Astrocyte of the spinal cord (primary cell): ENCODE measurements at regions of chr6 and their contacts with region 1.

Region 1: GRCh38 chr6:30541515-30542403 is 14.5 kb downstream of the GNL1 start:
- DNase-seq: peak; percentile 89
- H3K4me3 ChIP-seq: peak overlapping the region; percentile 14
- CTCF ChIP-seq: peak; percentile 100

Region 2: GRCh38 chr6:30463651-30464618 is 77.8 kb before region 1 on chr6:
- in situ Hi-C with region 1: loop called (anchors 10 kb)
- DNase-seq: peak; percentile 40
- H3K4me3 ChIP-seq: no peak overlapping the region
- CTCF ChIP-seq: no peak